Endothelial cell of umbilical vein (primary cell): ENCODE measurements at regions of chr18 and their contacts with region 1.

Region 1: DNA sequence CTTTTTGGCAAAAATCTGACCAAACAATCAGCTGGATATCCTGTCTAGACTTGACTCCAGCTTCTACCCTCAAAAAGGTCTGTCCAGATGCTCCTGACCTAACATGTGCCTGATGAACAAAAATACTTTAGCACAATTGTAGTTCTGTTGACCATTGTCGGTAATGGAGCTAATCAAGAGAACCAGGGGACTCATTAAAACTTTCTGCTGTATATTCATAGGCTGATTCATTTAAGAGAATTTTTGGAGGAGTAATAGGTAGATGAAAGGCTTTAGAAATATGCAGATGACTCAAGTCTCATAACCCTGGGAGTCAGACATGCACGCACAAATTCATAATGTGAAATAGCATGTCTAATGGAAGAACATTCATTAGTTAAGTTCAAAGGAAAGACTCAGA is 514.2 kb downstream of the TXNL1 start:
- DNase-seq: peak; percentile 75
- H3K4me3 ChIP-seq: no peak overlapping the region
- H3K27ac ChIP-seq: no peak overlapping the region
- H3K4me1 ChIP-seq: peaks cover 6% of the 10 kb centered on the region
- H3K27me3 ChIP-seq: no peaks in the 10 kb centered on the region
- CTCF ChIP-seq: no peak
- POLR2A ChIP-seq: no peak

Region 2: DNA sequence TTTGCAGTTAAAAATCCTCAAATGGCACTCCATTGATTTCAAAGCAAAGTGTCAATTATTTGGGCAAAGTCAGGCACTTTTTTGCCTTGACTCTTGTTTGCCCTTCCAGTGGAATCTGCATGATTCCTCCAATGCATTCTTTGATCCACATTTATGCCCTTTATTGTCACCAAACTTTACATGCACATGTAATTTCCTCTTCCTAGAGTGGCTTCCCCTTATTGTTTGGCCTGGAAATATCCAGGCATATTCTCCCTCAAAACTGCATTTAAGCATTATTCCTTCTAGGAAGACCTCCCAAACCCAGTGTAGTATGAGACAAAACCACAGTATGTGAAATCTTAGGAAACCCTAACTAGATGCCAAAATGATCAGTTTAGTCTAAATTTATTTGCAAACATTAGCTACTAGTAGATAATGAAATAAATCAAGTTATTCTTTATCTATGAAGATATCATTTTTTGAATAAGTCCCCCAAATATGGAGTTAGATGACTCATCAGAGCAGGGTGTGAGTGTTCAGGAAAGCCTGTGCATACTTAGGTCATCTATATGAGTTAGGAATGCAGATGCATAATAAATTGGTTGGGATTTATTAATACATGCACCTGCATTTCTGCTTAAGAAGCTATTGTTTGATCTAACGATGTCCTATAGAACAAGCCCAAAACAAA is 102.9 kb before region 1 on chr18:
- CTCF ChIA-PET with region 1: no interaction called
- POLR2A ChIA-PET with region 1: no interaction called
- dilution Hi-C with region 1: no loop called
- intact Hi-C with region 1: loop called (anchors 2 kb)
- DNase-seq: peak; percentile 86
- H3K4me3 ChIP-seq: peak overlapping the region in 1 of 3 experiments; percentile 3
- H3K27ac ChIP-seq: peak overlapping the region; percentile 93
- H3K4me1 ChIP-seq: peaks cover 35% of the 10 kb centered on the region
- H3K27me3 ChIP-seq: no peaks in the 10 kb centered on the region
- CTCF ChIP-seq: no peak
- POLR2A ChIP-seq: no peak